ENCODE measurements at regions of chr16 and their contacts with region 1.

Region 1: DNA sequence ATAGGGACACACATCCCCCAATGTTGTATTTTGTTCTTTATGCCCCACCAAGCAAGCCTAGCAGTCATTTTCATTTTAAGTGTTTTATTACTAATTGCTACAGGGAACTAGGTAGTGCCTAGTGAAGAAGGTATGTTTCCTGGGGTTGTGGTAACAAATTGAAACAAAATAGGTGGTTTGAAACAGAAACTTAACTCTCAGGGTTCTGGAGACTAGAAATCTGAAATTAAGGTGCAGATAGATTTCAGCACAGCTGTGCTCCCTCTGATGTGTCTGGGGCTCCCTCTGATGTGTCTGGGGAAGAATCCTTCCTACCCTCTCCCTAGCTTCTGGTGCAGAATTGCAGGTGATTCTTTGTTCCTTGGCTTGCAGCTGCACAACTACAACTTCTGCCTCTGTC is 390.1 kb downstream of the ZFHX3 start:
- DNase-seq: no peak

Region 2: DNA sequence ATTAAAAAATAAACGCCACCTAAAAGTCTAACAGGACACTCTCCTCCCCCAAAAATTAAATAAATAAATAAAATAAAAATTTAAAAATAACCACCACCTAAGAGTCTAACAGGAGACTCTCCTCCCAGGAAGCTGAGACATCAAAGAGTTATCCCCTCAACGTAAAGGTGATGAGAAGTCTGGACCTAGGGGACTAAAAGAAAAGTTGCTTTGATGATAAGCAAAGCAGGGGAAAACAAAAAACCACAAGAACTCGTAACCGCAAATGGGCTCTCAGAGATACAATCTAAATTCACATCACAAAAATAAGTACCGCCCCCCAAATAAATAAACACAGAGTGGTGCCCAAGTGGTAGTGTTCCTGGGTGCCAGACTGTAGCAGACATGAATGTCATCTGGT is 22.1 kb before region 1 on chr16:
- intact Hi-C with region 1: no loop called
- DNase-seq: no peak

Region 3: GRCh38 chr16:72753881-72754280 is 96.1 kb after region 1 on chr16:
- intact Hi-C with region 1: no loop called
- DNase-seq: no peak

Region 4: GRCh38 chr16:73546349-73546845 is 888.6 kb after region 1 on chr16:
- intact Hi-C with region 1: loop called in 1 of 2 experiments (anchors 10 kb)
- DNase-seq: no peak

Measured in posterior vena cava (tissue), 2 donors.